Activated CD4-positive, alpha-beta memory T cell treated with anti-CD3 and anti-CD28 coated beads, Interleukin-2, amount 10 ng/mL, durations not matched to agents 7 days and 5 days (primary cell): ENCODE measurements at regions of chr17 and their contacts with region 1.

Region 1: GRCh38 chr17:7351665-7352501 is at the start of gene KCTD11:
- DNase-seq: peak; percentile 85
- H3K4me3 Mint-ChIP-seq: peak within 1 kb of the TSS; percentile 66
- H3K27ac Mint-ChIP-seq: peak within 1 kb of the TSS; percentile 70
- H3K4me1 Mint-ChIP-seq: peaks cover 73% of the 10 kb centered on the region
- H3K27me3 Mint-ChIP-seq: no peaks in the 10 kb centered on the region
- total RNA-seq, gene KCTD11: 5.8 to 5.9 TPM

Region 2: DNA sequence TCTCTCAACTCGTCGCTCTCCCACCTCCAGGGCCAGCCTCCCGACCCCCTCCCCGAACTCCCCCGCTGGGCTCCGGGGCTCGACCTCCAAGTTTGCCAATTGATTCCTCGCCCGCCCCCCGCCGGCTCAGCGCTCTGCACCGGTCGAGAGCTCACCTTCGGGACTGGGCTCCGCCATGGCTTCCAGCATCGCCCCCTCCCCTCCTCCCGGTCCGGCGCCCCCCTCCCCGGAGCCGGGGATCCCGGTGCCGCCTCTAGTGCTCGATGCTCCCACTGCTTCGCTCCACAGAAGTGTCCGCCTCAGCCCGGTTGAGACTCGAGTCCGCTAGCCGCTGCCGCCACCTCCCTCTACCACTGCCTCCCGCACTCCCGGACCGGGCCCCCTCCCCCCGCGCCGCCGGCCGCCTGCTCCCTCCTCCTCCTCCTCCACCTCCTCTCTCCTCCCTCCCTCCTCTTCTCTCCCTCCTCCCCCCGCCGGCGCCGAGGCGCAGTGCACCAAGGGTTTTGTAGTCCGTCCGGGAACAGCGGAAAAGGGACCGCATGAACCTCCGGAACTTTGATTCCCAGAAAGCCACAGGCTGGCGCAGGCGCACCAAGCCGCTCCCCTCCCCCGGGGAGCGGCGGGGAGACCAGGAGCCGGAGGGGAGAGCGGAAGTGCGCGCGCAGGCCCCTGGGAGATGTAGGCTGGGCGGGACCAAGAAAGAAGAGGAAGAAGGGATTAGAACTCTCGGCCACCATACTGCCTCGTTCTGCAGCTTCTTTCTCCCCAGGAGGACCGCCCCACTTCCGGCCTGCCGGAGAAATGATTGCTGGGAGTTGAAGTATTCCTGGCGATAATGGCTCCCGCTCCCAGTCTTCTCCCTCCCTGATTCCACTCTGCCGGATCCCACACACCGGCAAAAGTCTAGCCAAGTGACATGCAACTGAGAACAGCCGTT is 112.5 kb before region 1 on chr17 and contains the start of gene PHF23:
- CTCF ChIA-PET with region 1: no interaction called
- POLR2A ChIA-PET with region 1: no interaction called
- DNase-seq: peak; percentile 98
- H3K4me3 Mint-ChIP-seq: peak within 1 kb of the TSS; percentile 87
- H3K27ac Mint-ChIP-seq: peak within 1 kb of the TSS; percentile 92
- H3K4me1 Mint-ChIP-seq: peaks cover 71% of the 10 kb centered on the region
- H3K27me3 Mint-ChIP-seq: no peaks in the 10 kb centered on the region
- total RNA-seq, gene PHF23: 45.9 to 53.1 TPM

Region 3: GRCh38 chr17:7314719-7315569 is 36.9 kb before region 1 on chr17 and contains the start of gene GPS2:
- CTCF ChIA-PET with region 1: interaction called, 3 read pairs
- POLR2A ChIA-PET with region 1: interaction called, 25 read pairs
- DNase-seq: peak; percentile 95
- H3K4me3 Mint-ChIP-seq: peak within 1 kb of the TSS; percentile 93
- H3K27ac Mint-ChIP-seq: peak within 1 kb of the TSS; percentile 91
- H3K4me1 Mint-ChIP-seq: peaks cover 58% of the 10 kb centered on the region
- H3K27me3 Mint-ChIP-seq: no peaks in the 10 kb centered on the region
- total RNA-seq, gene GPS2: 69.8 to 74.7 TPM

Region 4: DNA sequence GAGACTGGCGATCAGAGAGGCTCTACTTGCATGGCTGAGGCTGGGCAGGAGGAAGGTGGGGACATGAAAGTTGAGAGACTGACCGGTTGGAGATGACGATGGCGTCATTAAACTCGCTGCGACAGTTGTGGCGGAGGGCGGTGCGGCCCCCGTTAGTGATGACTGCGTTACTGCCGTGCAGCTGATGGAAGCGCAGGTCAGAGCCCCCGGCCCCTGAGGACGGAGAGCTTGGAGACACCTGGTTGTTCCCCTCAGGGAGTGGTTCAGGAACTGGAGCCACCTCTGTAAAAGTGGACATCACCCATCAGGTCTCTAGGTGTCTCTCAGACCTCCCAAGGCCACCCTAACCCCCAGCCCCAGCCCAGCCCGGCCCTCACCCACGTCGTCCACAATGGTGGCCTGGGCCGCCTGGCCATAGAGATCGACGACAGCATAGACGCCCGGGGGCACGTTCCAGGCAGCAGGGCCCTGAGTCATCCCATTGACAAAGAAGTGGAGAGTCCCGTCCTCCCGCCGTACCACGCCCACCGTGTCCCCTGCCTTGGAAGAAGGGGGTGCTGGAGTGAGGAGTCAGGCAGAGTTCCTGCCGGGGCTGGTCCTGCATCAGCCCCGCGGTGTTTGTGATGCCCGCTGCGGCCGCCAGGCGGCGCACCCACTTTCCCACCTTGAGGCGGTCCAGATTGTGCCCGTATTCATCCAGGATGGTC is 28.0 kb before region 1 on chr17:
- CTCF ChIA-PET with region 1: interaction called, 7 read pairs
- POLR2A ChIA-PET with region 1: interaction called, 16 read pairs
- DNase-seq: peak; percentile 71
- H3K4me3 Mint-ChIP-seq: no peak overlapping the region
- H3K27ac Mint-ChIP-seq: no peak overlapping the region
- H3K4me1 Mint-ChIP-seq: peaks cover 22% of the 10 kb centered on the region
- H3K27me3 Mint-ChIP-seq: no peaks in the 10 kb centered on the region

Region 5: GRCh38 chr17:7329374-7329996 is 22.4 kb before region 1 on chr17:
- CTCF ChIA-PET with region 1: interaction called, 20 read pairs
- POLR2A ChIA-PET with region 1: interaction called, 16 read pairs
- DNase-seq: peak; percentile 97
- H3K4me3 Mint-ChIP-seq: peak overlapping the region; percentile 85
- H3K27ac Mint-ChIP-seq: peak overlapping the region; percentile 93
- H3K4me1 Mint-ChIP-seq: peaks cover 49% of the 10 kb centered on the region
- H3K27me3 Mint-ChIP-seq: no peaks in the 10 kb centered on the region

Region 6: GRCh38 chr17:7336240-7337175 is 15.4 kb before region 1 on chr17 and contains the start of gene ACAP1:
- CTCF ChIA-PET with region 1: interaction called, 18 read pairs
- POLR2A ChIA-PET with region 1: interaction called, 86 read pairs
- DNase-seq: peak; percentile 93
- H3K4me3 Mint-ChIP-seq: peak within 1 kb of the TSS; percentile 91
- H3K27ac Mint-ChIP-seq: peak within 1 kb of the TSS; percentile 91
- H3K4me1 Mint-ChIP-seq: peaks cover 59% of the 10 kb centered on the region
- H3K27me3 Mint-ChIP-seq: no peaks in the 10 kb centered on the region
- total RNA-seq, gene ACAP1: 682 to 709 TPM

Region 7: DNA sequence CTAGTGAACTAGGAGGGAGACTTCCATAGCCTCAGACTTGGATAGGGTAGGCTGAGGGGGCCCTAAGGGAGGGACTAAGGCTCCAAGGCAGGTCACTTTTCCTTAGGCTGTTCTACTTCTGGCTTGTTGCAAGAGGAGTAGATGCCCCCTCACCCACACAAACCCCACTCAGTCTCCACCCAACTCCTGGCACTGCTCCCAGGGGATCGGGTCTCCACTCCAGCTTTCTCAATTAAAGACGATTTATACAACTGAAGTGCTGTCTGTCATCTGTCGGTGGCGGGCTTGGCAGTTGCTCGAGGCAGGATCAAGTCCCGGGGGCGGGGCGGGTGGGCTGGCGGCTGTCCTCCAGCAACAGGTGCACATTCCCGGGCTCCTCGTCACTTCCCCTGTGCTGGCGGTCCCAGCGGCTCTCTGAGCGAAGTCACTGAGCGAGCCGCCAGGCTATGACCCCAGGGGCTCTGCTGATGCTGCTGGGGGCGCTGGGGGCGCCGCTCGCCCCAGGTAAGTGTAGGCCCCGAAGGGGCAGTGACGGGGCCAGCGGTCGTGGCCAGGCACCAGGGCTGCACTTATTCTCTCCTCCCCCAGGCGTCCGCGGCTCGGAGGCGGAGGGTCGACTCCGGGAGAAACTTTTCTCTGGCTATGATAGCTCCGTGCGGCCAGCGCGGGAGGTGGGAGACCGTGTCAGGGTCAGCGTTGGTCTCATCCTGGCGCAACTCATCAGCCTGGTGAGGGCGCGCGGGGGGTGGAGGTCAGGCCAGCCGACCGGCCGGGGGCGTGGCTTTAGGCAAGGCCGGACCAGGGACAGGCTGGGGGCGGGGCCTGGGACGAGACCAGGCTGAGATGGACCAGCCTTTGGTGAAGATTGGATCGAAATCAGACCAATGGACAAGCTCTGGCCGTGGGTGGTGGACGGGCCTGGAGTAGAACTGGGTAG is 93.1 kb after region 1 on chr17 and contains the start of gene CHRNB1:
- CTCF ChIA-PET with region 1: interaction called, 18 read pairs
- POLR2A ChIA-PET with region 1: interaction called, 3 read pairs
- DNase-seq: peak; percentile 21
- H3K4me3 Mint-ChIP-seq: peak within 1 kb of the TSS; percentile 59
- H3K27ac Mint-ChIP-seq: no peak within 1 kb of the TSS
- H3K4me1 Mint-ChIP-seq: peaks cover 26% of the 10 kb centered on the region
- H3K27me3 Mint-ChIP-seq: peaks cover 65% of the 10 kb centered on the region
- total RNA-seq, gene CHRNB1: 13.0 to 14.6 TPM

Region 8: GRCh38 chr17:8376271-8377067 is 1024.6 kb after region 1 on chr17 and contains the start of gene KRABD2:
- CTCF ChIA-PET with region 1: no interaction called
- POLR2A ChIA-PET with region 1: no interaction called
- DNase-seq: peak; percentile 90
- H3K4me3 Mint-ChIP-seq: peak within 1 kb of the TSS; percentile 75
- H3K27ac Mint-ChIP-seq: peak within 1 kb of the TSS; percentile 80
- H3K4me1 Mint-ChIP-seq: peaks cover 59% of the 10 kb centered on the region
- H3K27me3 Mint-ChIP-seq: no peaks in the 10 kb centered on the region